Psoas muscle (tissue), 8 donors: ENCODE measurements at regions of chr10 and their contacts with region 1.

Region 1: DNA sequence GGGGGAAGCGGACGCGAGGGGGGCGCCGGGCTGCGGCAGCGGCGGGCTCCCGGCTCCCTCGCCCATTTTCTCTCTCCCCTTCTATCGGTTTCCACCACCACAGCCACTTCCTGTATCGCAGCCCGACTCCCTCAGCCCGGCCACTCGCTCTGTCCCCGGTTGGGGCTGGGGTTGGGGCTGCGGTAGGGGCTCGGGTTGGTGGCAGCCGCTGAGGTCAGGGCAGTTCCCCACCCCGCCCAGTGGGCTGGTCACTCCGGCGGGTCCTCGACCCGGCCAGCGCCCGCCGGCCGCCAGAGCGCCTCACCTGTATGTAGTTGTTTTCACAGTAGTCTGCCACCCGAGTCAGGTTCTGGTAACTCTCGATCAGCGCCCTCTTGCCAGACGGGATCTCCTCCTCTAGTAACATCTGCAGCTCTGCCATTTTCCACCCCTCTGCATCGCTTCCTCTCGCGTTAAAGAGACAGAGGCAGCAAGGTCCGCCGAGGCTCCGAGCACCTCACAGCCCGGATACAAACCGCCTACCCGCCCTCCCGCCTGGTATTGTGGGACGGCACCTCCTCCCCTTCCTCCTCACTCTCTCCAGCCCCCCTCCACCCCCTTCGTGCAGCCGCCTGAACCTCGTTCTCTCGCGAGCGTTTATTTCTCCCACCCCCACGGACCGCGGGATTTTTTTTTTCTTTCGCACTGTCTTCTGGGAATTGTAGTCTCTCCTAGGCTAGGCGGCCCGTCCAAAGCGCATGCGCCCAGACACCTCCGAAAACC is at the start of gene ABI1:
- DNase-seq: peak; percentile 98 to 99
- ATAC-seq: peak; percentile 93 to 96 (median 94)
- H3K4me3 ChIP-seq: peak within 1 kb of the TSS; percentile 73
- H3K27ac ChIP-seq: peak within 1 kb of the TSS; percentile 95
- H3K4me1 ChIP-seq: peaks cover 33% of the 10 kb centered on the region
- H3K27me3 ChIP-seq: no peaks in the 10 kb centered on the region
- CTCF ChIP-seq: no peak
- total RNA-seq, gene ABI1: 24.9 to 33.8 (median 31.2) TPM

Region 2: GRCh38 chr10:26697163-26697921 is 163.3 kb before region 1 on chr10 and contains the start of gene PDSS1:
- intact Hi-C with region 1: loop called in 1 of 2 experiments (anchors 5 kb)
- DNase-seq: peak; percentile 75 to 86
- ATAC-seq: peak; percentile 87 to 94 (median 90)
- H3K4me3 ChIP-seq: peak within 1 kb of the TSS; percentile 100
- H3K27ac ChIP-seq: peak within 1 kb of the TSS; percentile 90
- H3K4me1 ChIP-seq: peaks cover 14% of the 10 kb centered on the region
- H3K27me3 ChIP-seq: no peaks in the 10 kb centered on the region
- CTCF ChIP-seq: no peak
- total RNA-seq, gene PDSS1: 4.3 to 18.9 (median 6.9) TPM

Region 3: DNA sequence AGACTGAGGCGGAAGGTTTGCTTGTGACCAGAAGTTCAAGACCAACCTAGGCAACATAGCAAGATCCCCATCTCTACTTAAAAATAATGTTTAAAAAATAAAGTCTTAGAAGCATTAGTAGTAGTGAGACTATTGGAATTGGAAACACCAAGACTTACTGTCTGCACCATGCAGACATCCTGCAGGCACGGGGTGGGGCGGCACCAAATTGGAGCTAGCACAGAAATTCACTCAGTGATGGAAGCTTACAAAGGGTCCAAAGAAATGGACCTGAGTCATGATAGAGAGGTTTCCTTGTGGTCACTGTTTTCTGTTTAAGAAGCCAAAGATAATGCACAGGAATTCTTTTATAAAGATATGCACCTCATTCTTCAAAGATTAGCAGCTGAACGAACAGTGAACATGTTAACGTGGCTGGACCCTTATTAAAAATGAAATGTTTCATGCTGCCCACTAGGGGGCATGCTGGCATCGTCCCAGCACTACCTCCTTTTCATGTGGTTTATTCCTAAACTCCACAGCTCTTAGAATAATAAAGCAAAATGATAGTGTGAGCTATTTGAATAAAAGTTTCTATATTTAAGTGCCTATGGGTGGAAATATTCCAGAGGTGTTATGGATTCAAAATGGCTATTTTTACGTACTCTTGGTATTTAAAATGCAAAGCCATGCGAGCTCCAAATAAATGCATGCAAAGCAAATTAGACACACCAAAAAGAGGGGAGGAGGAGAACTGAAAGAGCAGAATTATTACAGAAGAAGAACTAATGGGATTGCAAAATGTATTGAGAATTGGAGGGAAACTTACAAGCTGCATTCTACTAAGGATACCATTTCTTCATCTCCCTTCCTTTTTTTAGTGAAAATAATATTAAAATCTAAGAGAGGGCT is 134.5 kb before region 1 on chr10:
- intact Hi-C with region 1: loop called in 1 of 2 experiments (anchors 5 kb)
- DNase-seq: peak; percentile 59 to 77
- ATAC-seq: peak in 3 of 4 donors; percentile 36 to 83 (median 59)
- H3K4me3 ChIP-seq: no peak overlapping the region
- H3K27ac ChIP-seq: no peak overlapping the region
- H3K4me1 ChIP-seq: no peaks in the 10 kb centered on the region
- H3K27me3 ChIP-seq: no peaks in the 10 kb centered on the region
- CTCF ChIP-seq: peak; percentile 85

Region 4: GRCh38 chr10:26790221-26790995 is 70.2 kb before region 1 on chr10:
- intact Hi-C with region 1: loop called in 1 of 2 experiments (anchors 5 kb)
- DNase-seq: no peak
- ATAC-seq: no peak
- H3K4me3 ChIP-seq: no peak overlapping the region
- H3K27ac ChIP-seq: no peak overlapping the region
- H3K4me1 ChIP-seq: no peaks in the 10 kb centered on the region
- H3K27me3 ChIP-seq: no peaks in the 10 kb centered on the region
- CTCF ChIP-seq: no peak